Endothelial cell of umbilical vein (primary cell): ENCODE measurements at regions of chr16 and their contacts with region 1.

Region 1: GRCh38 chr16:27639561-27640276 is 89.8 kb downstream of the KATNIP start:
- DNase-seq: peak; percentile 64
- H3K4me3 ChIP-seq: no peak overlapping the region
- H3K27ac ChIP-seq: no peak overlapping the region
- H3K4me1 ChIP-seq: no peaks in the 10 kb centered on the region
- H3K27me3 ChIP-seq: no peaks in the 10 kb centered on the region
- CTCF ChIP-seq: peak; percentile 69 to 81
- POLR2A ChIP-seq: no peak

Region 2: GRCh38 chr16:27628241-27628942 is 11.3 kb before region 1 on chr16:
- CTCF ChIA-PET with region 1: interaction called, 23 read pairs
- POLR2A ChIA-PET with region 1: no interaction called
- dilution Hi-C with region 1: no loop called
- intact Hi-C with region 1: no loop called
- DNase-seq: no peak
- H3K4me3 ChIP-seq: no peak overlapping the region
- H3K27ac ChIP-seq: no peak overlapping the region
- H3K4me1 ChIP-seq: peaks cover 2% of the 10 kb centered on the region
- H3K27me3 ChIP-seq: no peaks in the 10 kb centered on the region
- CTCF ChIP-seq: no peak
- POLR2A ChIP-seq: no peak

Region 3: GRCh38 chr16:27690608-27691007 is 50.9 kb after region 1 on chr16:
- CTCF ChIA-PET with region 1: interaction called, 20 read pairs
- POLR2A ChIA-PET with region 1: no interaction called
- dilution Hi-C with region 1: no loop called
- intact Hi-C with region 1: loop called (anchors 5 kb)
- DNase-seq: peak; percentile 28
- H3K4me3 ChIP-seq: no peak overlapping the region
- H3K27ac ChIP-seq: no peak overlapping the region
- H3K4me1 ChIP-seq: no peaks in the 10 kb centered on the region
- H3K27me3 ChIP-seq: no peaks in the 10 kb centered on the region
- CTCF ChIP-seq: peak; percentile 65 to 71
- POLR2A ChIP-seq: no peak

Region 4: GRCh38 chr16:27759301-27759871 is 119.7 kb after region 1 on chr16:
- CTCF ChIA-PET with region 1: interaction called, 11 read pairs
- POLR2A ChIA-PET with region 1: no interaction called
- dilution Hi-C with region 1: no loop called
- intact Hi-C with region 1: no loop called
- DNase-seq: peak; percentile 58
- H3K4me3 ChIP-seq: no peak overlapping the region
- H3K27ac ChIP-seq: peak overlapping the region; percentile 62
- H3K4me1 ChIP-seq: peaks cover 11% of the 10 kb centered on the region
- H3K27me3 ChIP-seq: no peaks in the 10 kb centered on the region
- CTCF ChIP-seq: no peak
- POLR2A ChIP-seq: no peak

Region 5: GRCh38 chr16:27906883-27907282 is 267.2 kb after region 1 on chr16:
- CTCF ChIA-PET with region 1: no interaction called
- POLR2A ChIA-PET with region 1: no interaction called
- dilution Hi-C with region 1: no loop called
- intact Hi-C with region 1: no loop called
- DNase-seq: no peak
- H3K4me3 ChIP-seq: no peak overlapping the region
- H3K27ac ChIP-seq: no peak overlapping the region
- H3K4me1 ChIP-seq: no peaks in the 10 kb centered on the region
- H3K27me3 ChIP-seq: no peaks in the 10 kb centered on the region
- CTCF ChIP-seq: no peak
- POLR2A ChIP-seq: no peak

Region 6: GRCh38 chr16:27972500-27972899 is 332.8 kb after region 1 on chr16:
- CTCF ChIA-PET with region 1: interaction called, 15 read pairs
- POLR2A ChIA-PET with region 1: no interaction called
- dilution Hi-C with region 1: no loop called
- intact Hi-C with region 1: no loop called
- DNase-seq: peak; percentile 49
- H3K4me3 ChIP-seq: no peak overlapping the region
- H3K27ac ChIP-seq: no peak overlapping the region
- H3K4me1 ChIP-seq: no peaks in the 10 kb centered on the region
- H3K27me3 ChIP-seq: no peaks in the 10 kb centered on the region
- CTCF ChIP-seq: peak; percentile 32 to 55
- POLR2A ChIP-seq: no peak

Region 7: DNA sequence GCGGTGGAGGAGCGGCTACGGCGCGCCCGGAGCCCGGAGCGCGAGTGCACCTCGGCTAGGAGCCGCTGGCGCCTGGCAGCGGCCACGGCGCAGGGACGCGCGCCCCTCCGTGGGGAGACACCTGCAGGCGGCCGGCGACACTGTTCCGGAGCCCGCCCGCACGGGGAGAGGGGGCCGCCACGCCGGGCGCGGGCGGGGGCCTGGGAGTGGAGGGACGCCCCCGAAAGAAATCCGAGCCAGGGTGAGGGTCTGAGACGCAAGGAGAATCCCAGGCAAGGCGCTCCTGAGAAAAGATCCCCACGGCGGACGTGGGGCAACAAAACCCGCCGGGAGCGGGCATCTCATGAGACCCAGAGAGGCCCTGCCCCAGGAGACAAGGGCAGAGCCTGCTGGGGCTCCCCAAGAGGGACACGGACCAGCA is 423.9 kb after region 1 on chr16 and contains the start of gene GSG1L:
- CTCF ChIA-PET with region 1: interaction called, 11 read pairs
- POLR2A ChIA-PET with region 1: no interaction called
- dilution Hi-C with region 1: no loop called
- intact Hi-C with region 1: no loop called
- DNase-seq: no peak
- H3K4me3 ChIP-seq: peak within 1 kb of the TSS in 1 of 3 experiments; percentile 18
- H3K27ac ChIP-seq: no peak within 1 kb of the TSS
- H3K4me1 ChIP-seq: no peaks in the 10 kb centered on the region
- H3K27me3 ChIP-seq: peaks cover 21 to 43% of the 10 kb centered on the region in 2 experiments
- CTCF ChIP-seq: no peak
- POLR2A ChIP-seq: no peak
- total RNA-seq, gene GSG1L: not detected in 2 replicates

Region 8: DNA sequence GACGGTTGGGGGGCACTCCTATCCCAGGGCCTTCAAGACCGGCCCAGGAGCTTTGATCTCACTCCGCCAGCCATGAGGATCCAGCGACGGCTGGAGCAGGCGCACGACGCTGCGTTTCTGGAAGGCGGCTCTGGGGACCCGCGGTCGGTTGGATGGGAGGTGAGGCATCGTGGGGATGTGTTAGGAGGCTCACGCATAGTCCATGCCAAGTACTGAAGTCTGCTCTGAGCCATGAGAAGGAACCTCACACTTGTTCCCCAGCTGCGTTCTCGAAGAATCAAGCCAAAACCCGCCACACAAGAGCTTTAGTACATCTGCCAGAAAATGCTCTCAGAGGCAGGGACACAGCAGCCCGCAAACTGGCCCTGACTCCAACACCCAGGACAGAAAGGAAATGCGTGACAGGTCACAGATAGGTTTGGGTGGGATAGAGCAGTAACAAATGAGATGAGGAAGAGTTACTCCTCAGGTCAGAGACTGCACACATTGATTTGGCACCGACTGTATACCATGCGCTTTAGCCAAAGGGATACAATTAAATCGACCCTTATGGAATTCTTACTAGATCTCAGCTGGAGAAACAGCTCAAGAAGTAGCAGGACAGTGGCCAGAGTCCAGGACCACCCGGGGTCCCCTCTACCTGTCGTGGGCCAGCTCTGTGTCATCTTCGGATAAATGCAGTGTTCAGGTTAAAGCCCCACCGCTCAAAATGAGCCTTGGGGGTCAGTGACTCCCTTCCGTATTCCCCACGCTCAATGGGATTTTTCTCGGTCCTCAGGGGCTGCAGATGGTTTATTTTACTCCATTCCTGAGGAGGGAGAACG is 430.5 kb after region 1 on chr16:
- CTCF ChIA-PET with region 1: interaction called, 55 read pairs
- POLR2A ChIA-PET with region 1: no interaction called
- dilution Hi-C with region 1: no loop called
- intact Hi-C with region 1: loop called (anchors 1 kb)
- DNase-seq: no peak
- H3K4me3 ChIP-seq: no peak overlapping the region
- H3K27ac ChIP-seq: no peak overlapping the region
- H3K4me1 ChIP-seq: no peaks in the 10 kb centered on the region
- H3K27me3 ChIP-seq: peaks cover 0 to 6% of the 10 kb centered on the region in 2 experiments
- CTCF ChIP-seq: no peak
- POLR2A ChIP-seq: no peak